Naive thymus-derived CD4-positive, alpha-beta T cell (primary cell): ENCODE measurements at regions of chr4 and their contacts with region 1.

Region 1: GRCh38 chr4:22427675-22428074 is 88.2 kb downstream of the ADGRA3 start:
- DNase-seq: no peak
- ATAC-seq: no peak
- H3K4me3 ChIP-seq: no peak overlapping the region
- H3K4me3 Mint-ChIP-seq: no peak overlapping the region
- H3K27ac ChIP-seq: no peak overlapping the region
- H3K27ac Mint-ChIP-seq: no peak overlapping the region
- H3K4me1 ChIP-seq: no peaks in the 10 kb centered on the region
- H3K4me1 Mint-ChIP-seq: no peaks in the 10 kb centered on the region
- H3K27me3 ChIP-seq: no peaks in the 10 kb centered on the region
- H3K27me3 Mint-ChIP-seq: no peaks in the 10 kb centered on the region

Region 2: DNA sequence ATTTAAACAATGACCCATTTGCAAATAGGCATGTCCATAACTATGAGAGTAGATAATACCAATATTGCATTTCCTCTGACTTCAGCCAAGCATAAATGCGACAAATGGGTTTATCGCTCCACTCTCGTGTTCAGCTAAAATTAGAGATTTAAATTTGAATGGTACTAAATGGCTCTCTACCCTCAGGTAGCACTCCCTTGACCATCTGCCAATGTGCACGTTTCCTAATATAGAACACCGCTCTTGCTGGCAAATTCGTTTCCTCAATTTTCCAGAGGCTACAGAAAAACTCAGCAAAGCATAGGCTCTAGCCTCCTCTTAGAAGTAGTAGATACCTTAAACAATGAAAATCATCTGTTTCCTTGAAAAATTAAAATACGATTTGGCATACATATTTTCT is 163.4 kb before region 1 on chr4:
- CTCF ChIA-PET with region 1: no interaction called
- POLR2A ChIA-PET with region 1: no interaction called
- intact Hi-C with region 1: no loop called
- DNase-seq: no peak
- ATAC-seq: no peak
- H3K4me3 ChIP-seq: no peak overlapping the region
- H3K4me3 Mint-ChIP-seq: no peak overlapping the region
- H3K27ac ChIP-seq: no peak overlapping the region
- H3K27ac Mint-ChIP-seq: no peak overlapping the region
- H3K4me1 ChIP-seq: no peaks in the 10 kb centered on the region
- H3K4me1 Mint-ChIP-seq: peaks cover 0 to 2% (median 0%) of the 10 kb centered on the region in 7 donors
- H3K27me3 ChIP-seq: no peaks in the 10 kb centered on the region
- H3K27me3 Mint-ChIP-seq: peaks cover 0 to 5% (median 0%) of the 10 kb centered on the region in 5 donors

Region 3: DNA sequence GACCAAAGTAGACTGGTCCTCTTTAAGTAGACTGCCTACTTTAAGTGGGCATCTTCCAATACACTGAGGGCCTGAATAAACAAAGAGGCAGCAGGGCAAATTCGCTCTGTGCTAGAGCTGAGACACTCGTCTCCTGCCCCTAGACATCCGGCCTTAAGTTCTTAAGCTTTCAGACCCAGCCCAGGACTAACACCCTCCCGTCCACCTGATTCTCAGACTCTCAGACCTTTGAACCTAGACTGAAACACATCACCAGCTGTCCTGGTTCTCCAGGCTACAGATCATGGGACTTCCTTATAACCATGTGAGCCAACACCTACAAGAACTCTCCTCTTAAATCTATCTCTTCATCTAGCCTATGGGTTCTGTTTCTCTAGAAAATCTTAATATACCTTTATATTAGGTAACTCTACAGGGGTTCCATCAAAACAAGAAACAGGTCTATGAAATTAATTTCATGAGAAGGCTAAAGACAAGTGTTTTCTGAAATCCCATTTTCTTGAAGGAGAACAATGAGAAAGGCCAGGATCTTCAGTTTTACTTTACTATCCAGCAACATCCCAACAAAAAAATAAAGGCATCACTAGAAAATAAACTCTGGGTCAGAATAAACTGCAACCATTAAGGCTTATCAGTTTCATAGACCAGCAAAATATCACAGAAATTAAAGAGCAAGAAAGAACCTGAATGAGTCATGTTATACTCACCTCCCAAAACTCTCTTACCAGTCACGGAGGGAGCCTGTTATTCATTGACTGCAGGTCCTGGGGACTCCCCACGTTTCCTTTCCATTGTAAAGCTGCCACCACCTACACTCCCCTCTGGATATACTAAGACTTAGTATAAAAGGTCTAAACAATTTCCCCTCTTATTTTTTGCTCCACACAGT is 73.4 kb after region 1 on chr4:
- CTCF ChIA-PET with region 1: no interaction called
- POLR2A ChIA-PET with region 1: no interaction called
- intact Hi-C with region 1: loop called in 1 of 2 experiments (anchors 1 kb)
- DNase-seq: peak in 1 of 9 donors; percentile 35
- ATAC-seq: no peak
- H3K4me3 ChIP-seq: no peak overlapping the region
- H3K4me3 Mint-ChIP-seq: no peak overlapping the region
- H3K27ac ChIP-seq: no peak overlapping the region
- H3K27ac Mint-ChIP-seq: no peak overlapping the region
- H3K4me1 ChIP-seq: no peaks in the 10 kb centered on the region
- H3K4me1 Mint-ChIP-seq: peaks cover 0 to 22% (median 13%) of the 10 kb centered on the region in 7 donors
- H3K27me3 ChIP-seq: no peaks in the 10 kb centered on the region
- H3K27me3 Mint-ChIP-seq: no peaks in the 10 kb centered on the region

Region 4: GRCh38 chr4:22573198-22573597 is 145.5 kb after region 1 on chr4:
- CTCF ChIA-PET with region 1: no interaction called
- POLR2A ChIA-PET with region 1: no interaction called
- intact Hi-C with region 1: no loop called
- DNase-seq: no peak
- ATAC-seq: no peak
- H3K4me3 ChIP-seq: no peak overlapping the region
- H3K4me3 Mint-ChIP-seq: no peak overlapping the region
- H3K27ac ChIP-seq: no peak overlapping the region
- H3K27ac Mint-ChIP-seq: no peak overlapping the region
- H3K4me1 ChIP-seq: no peaks in the 10 kb centered on the region
- H3K4me1 Mint-ChIP-seq: peaks cover 0 to 10% (median under 1%) of the 10 kb centered on the region in 7 donors
- H3K27me3 ChIP-seq: no peaks in the 10 kb centered on the region
- H3K27me3 Mint-ChIP-seq: no peaks in the 10 kb centered on the region